ENCODE measurements at regions of chr4 and their contacts with region 1.

Region 1: DNA sequence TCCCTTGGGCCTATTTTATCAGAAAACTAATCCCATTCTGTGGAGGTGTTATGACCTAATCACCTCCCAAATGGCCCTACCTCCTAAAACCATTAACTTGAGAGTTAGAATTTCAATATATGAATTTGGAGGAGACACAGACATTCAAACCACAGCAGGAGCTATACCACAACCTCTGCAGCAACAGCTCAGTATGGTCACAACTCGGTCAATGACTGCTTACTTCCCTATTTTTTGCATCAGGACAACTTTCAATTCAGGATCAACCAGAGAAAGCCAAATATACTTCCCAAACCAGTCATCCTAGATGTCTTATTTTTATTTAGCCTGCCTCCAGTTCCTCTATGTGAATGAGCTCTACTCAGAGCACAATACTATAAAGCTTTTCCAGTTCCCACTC is 11.3 kb upstream of the SMARCA5 start:
- DNase-seq: no peak
- ATAC-seq: no peak
- H3K4me3 ChIP-seq: no peak overlapping the region
- H3K27ac ChIP-seq: no peak overlapping the region
- H3K4me1 ChIP-seq: no peaks in the 10 kb centered on the region
- H3K27me3 ChIP-seq: no peaks in the 10 kb centered on the region; the same call in 1 of the 2 replicates
- CTCF ChIP-seq: no peak
- POLR2A ChIP-seq: no peak
- RAD21 ChIP-seq: no peak

Region 2: DNA sequence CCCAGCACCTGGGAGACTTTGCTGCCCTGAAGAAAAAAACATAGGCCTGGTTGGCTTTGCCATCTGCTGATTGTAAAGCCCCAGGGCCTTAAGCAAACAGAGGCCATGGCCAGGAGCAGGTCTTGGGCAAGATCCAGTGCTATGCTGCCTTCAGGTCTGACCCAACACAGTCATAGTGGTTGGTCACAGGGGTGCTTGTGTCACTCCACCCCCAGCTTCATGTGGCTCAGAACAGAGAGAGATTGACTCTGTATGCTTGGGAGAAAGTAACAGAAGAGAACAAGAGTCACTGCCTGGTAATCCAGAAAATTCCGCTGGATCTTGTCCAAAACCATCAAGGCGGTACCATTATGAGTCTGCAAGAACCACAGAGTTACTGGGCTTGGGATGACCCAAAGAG is 13.1 kb before region 1 on chr4:
- CTCF ChIA-PET with region 1: no interaction called
- POLR2A ChIA-PET with region 1: no interaction called
- dilution Hi-C with region 1: no loop called
- in situ Hi-C with region 1: no loop called
- intact Hi-C with region 1: loop called (anchors 1 kb)
- DNase-seq: peak; percentile 28
- ATAC-seq: no peak
- H3K4me3 ChIP-seq: no peak overlapping the region
- H3K27ac ChIP-seq: no peak overlapping the region
- H3K4me1 ChIP-seq: no peaks in the 10 kb centered on the region
- H3K27me3 ChIP-seq: no peaks in the 10 kb centered on the region
- CTCF ChIP-seq: no peak
- POLR2A ChIP-seq: no peak
- RAD21 ChIP-seq: no peak

Measured in IMR-90 (cell line).